Activated CD4-positive, alpha-beta T cell treated with anti-CD3 and anti-CD28 coated beads for 36 hours (primary cell): ENCODE measurements at regions of chr20 and their contacts with region 1.

Region 1: DNA sequence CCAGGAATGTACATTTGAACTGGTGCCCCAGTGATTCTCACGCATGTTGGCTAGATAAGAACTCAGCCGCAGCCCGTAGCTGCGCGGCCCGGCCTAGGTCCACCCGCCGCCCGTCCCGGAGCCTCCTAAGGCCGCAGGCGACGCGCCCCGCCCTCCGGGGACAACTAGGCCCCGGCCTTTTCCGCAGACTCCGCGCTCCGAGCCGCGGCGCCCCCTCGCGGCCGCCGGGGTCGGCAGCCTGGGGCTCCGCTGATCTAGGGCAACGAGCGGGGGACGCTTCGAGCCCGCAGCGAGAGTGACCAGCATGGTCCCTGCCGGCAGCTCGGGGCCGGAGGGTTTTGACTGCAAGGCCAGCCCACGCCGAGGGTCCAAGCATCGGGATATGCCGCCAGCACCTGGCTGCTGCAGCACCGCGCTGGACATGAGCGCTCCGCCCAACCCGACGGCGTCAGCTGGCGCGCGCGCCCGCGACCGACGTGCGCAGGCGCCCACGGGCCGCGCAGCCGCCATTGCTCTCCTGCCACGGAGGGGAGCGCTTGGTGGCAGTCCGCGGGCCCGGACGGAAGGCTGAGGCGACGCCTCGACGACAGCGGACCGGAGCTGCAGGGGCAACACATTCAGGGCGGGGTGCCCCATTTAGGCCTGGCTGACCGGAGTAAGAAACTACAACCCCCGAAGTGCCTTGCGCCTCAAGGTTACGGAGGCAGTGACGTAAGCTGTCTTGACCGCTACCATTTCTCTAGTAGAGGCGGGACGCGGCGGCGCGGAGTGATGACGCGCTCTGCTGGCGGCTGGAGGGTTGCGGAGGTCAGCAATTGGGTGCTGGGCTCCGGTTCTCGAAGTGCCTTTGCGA is at the start of gene AP5S1:
- DNase-seq: peak; percentile 96
- ATAC-seq: peak; percentile 86
- H3K4me3 Mint-ChIP-seq: peak within 1 kb of the TSS; percentile 89
- H3K27ac Mint-ChIP-seq: peak within 1 kb of the TSS; percentile 96
- H3K4me1 Mint-ChIP-seq: peaks cover 33% of the 10 kb centered on the region
- H3K27me3 Mint-ChIP-seq: no peaks in the 10 kb centered on the region
- total RNA-seq, gene AP5S1: 9.1 to 11.3 TPM

Region 2: DNA sequence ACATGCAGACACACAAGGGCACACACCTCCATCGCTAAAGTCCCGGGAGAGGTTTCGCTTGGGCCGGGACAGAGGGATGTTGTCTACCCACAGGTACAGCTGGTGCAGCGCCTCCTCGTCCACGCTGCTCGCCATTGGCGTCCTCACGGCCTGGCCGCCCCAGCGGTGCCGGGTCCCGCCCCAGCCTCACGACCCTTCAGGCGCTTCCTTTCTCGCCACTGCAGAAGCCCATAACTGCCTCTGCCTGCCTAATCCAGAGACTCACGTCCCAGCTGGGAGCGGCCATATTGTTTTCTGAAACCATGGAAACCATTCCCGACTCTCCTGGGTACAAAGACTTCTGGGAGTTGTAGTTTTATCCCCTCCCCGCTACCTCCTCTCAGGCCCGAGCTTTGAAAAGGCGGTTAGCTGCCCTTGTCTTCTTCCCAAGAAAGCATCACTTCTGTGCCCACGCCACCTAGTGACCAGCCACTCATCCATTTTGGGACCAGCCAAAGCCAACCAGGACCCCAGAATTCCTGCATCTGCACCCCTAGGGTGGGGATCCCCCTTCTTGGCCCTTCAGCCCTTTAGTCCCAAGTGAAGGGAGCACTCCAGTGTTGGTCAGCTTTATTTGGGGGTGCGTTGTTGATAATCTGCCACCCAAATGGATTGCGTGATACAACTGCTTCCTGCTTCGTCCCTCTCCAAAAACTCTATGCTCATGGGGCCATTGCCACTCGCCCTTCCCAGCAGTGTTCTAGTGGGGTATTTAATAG is 38.9 kb before region 1 on chr20 and contains the start of gene SPEF1:
- CTCF ChIA-PET with region 1: interaction called, 44 read pairs
- POLR2A ChIA-PET with region 1: interaction called, 5 read pairs
- intact Hi-C with region 1: loop called (anchors 1 kb)
- DNase-seq: peak; percentile 68
- ATAC-seq: peak; percentile 65
- H3K4me3 Mint-ChIP-seq: peak within 1 kb of the TSS; percentile 42
- H3K27ac Mint-ChIP-seq: peak within 1 kb of the TSS; percentile 51
- H3K4me1 Mint-ChIP-seq: peaks cover 45% of the 10 kb centered on the region
- H3K27me3 Mint-ChIP-seq: peaks cover 15% of the 10 kb centered on the region
- total RNA-seq, gene SPEF1: 0.14 TPM in 1 of 2 experiments, not detected in the other

Region 3: DNA sequence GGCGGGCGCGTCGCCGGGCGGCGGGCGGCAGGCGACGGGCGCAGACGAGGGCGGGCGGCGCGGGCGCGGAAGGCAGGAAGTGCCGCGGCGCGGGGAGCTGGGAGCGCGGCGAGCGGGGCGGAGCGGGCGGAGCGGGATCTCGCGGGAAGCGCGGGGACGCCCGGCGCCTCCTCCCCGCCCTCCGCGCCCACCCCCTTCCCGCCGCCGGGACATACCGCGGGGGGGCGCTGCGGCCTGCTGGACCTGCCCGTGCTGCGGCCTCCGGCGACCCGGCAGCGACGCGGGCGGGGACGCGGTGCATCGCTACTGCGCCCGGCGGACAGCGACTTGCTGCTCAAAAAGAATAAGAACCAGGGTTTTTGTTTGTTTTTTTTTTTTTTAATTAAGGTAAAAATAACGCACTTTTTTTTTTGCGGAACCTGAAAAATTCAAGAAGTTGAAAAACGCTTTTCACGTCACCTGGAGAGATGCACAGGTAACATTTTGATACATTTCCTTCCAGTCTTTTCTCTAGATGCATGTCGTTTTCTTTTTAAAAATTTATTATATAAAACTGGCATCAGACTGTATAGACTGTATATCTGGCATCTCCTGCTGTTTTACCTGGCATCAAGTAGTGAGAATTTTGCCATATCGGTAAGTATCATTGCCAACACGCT is 33.5 kb before region 1 on chr20 and contains the start of gene CENPB:
- CTCF ChIA-PET with region 1: interaction called, 44 read pairs
- POLR2A ChIA-PET with region 1: interaction called, 5 read pairs
- intact Hi-C with region 1: loop called (anchors 1 kb)
- DNase-seq: peak; percentile 95
- ATAC-seq: peak; percentile 89
- H3K4me3 Mint-ChIP-seq: peak within 1 kb of the TSS; percentile 77
- H3K27ac Mint-ChIP-seq: peak within 1 kb of the TSS; percentile 84
- H3K4me1 Mint-ChIP-seq: peaks cover 39% of the 10 kb centered on the region
- H3K27me3 Mint-ChIP-seq: no peaks in the 10 kb centered on the region
- total RNA-seq, gene CENPB: 46.2 to 48.3 TPM

Region 4: DNA sequence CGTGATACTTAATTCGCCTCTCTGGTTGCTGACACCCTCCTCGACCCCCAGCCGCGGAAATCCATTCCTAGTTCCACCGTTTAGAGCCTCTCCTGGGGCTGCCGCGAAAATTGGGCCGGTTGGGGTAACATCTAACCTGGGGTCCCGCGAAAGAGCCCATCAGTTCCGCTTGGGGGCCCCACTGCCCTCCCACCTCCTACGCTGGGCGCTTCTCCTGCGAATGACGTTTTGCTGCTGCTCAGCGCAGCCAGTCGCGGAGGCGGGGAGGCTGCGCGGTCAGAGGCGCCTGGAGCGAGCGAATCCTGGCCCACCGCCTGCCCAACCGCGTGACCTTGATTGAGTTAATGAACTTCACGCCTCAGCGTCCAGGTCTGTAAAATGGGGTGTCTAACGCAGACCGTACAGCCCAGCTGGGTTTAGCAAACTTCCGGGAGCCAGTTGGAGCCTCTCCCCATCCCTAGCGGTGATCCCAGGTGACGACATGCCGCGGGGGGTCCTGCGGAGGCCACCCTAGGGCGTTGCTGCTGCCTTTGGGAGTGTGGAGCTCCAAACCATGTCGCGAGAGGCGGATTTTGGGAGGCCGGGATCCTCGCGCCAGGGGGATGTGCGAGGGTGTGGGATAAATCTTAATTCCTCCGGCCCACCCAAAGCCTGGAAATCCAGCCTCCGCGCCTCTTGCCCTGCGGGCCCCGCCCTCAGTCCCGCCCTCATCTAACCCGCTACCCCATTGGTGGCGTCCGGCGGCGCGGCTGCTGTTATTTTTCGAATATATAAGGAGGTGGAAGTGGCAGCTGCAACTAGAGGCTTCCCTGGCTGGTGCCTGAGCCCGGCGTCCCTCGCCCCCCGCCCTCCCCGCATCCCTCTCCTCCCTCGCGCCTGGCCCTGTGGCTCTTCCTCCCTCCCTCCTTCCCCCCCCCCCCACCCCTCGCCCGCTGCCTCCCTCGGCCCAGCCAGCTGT is 24.5 kb before region 1 on chr20 and contains the start of gene CDC25B:
- CTCF ChIA-PET with region 1: interaction called, 44 read pairs
- POLR2A ChIA-PET with region 1: interaction called, 4 read pairs
- intact Hi-C with region 1: loop called (anchors 1 kb)
- DNase-seq: peak; percentile 95
- ATAC-seq: peak; percentile 82
- H3K4me3 Mint-ChIP-seq: peak within 1 kb of the TSS; percentile 93
- H3K27ac Mint-ChIP-seq: peak within 1 kb of the TSS; percentile 98
- H3K4me1 Mint-ChIP-seq: peaks cover 47% of the 10 kb centered on the region
- H3K27me3 Mint-ChIP-seq: no peaks in the 10 kb centered on the region
- total RNA-seq, gene CDC25B: 79.8 to 96.2 TPM

Region 5: DNA sequence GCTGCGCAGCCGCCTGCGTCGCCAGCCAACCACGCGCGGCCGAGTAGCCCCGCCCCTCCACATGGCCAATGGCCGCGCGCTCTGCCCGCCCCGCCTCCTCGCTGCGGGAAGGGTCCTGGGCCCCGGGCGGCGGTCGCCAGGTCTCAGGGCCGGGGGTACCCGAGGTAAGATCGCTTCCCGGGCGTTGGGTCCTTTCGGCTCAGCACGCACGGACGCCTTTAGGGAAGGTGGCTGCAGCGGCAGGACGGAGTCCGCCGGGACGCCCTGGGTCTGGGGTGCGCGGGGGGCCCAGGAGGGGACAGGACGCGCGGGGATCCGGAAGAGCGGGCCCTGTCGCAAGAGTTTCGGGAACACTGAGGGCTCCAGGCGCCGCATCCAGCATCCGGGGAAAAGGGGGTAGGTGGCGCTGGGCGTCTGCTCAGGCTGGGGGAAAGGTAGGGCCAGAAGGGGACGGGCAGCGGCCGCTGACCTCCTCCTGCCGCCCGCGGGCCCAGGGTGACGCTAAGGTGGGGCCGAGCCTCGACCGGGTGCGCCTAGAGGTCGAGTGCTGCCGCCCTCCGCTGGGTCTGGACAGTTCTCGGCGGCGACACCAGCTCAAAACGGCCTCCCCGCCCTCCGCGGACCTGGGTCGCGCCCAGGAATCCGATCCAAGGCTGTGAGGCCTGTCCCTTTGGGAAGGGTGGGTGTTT is 26.6 kb after region 1 on chr20 and contains the start of gene MAVS:
- CTCF ChIA-PET with region 1: interaction called, 12 read pairs
- POLR2A ChIA-PET with region 1: no interaction called
- intact Hi-C with region 1: loop called (anchors 1 kb)
- DNase-seq: peak; percentile 91
- ATAC-seq: peak; percentile 98
- H3K4me3 Mint-ChIP-seq: peak within 1 kb of the TSS; percentile 88
- H3K27ac Mint-ChIP-seq: peak within 1 kb of the TSS; percentile 84
- H3K4me1 Mint-ChIP-seq: peaks cover 22% of the 10 kb centered on the region
- H3K27me3 Mint-ChIP-seq: no peaks in the 10 kb centered on the region
- total RNA-seq, gene MAVS: 23.2 to 25.9 TPM

Region 6: GRCh38 chr20:3854462-3854871 is 34.2 kb after region 1 on chr20:
- CTCF ChIA-PET with region 1: interaction called, 10 read pairs
- POLR2A ChIA-PET with region 1: no interaction called
- intact Hi-C with region 1: loop called in 1 of 2 experiments (anchors 2 kb)
- DNase-seq: no peak
- ATAC-seq: no peak
- H3K4me3 Mint-ChIP-seq: no peak overlapping the region
- H3K27ac Mint-ChIP-seq: no peak overlapping the region
- H3K4me1 Mint-ChIP-seq: peaks cover 4% of the 10 kb centered on the region
- H3K27me3 Mint-ChIP-seq: no peaks in the 10 kb centered on the region